PC-3 (cell line): ENCODE measurements at regions of chr9 and their contacts with region 1.

Region 1: DNA sequence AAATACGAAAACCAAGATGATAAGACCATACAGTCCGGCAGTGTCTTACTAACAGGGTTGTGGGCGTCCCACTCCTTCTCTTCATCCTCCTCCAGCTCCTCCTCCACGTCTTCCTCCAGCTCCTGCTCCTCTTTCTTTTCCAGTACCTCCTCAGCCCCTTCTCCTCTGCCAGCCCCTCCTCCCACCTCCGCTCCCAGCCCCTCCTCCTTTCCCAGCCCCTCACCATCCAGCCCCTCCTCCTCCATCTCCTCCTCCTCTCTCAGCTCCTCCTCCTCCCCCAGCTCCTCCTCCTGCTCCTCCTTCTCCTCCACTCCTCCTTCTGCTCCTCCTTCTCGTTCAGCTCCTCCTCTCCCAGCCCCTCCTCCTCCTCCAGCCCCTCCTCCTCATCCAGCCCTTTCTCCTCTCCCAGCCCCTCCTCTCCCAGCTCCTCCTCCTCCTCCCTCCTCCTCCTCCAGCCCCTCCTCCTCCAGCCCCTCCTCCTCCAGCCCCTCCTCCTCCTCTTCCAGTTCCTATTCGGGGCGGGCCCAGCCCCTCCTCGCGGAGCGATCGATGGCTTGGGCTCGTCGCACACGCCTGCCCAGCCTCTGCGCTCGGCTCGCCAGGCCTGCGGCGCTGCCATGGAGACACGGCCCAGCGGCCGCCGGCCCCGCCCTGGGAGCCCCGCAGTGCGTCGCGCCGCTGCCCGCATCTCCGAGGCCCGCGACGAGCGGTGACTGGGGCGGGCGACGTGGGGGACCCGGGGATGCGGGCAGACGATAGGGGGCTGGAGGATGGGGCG is at the start of gene BRD3OS:
- DNase-seq: peak; percentile 93
- ATAC-seq: peak; percentile 86
- H3K4me3 ChIP-seq: peak within 1 kb of the TSS; percentile 83
- H3K27ac ChIP-seq: no peak within 1 kb of the TSS
- H3K4me1 ChIP-seq: peaks cover 4% of the 10 kb centered on the region
- H3K27me3 ChIP-seq: no peaks in the 10 kb centered on the region
- CTCF ChIP-seq: no peak
- total RNA-seq, gene BRD3OS: 13.6 and 19.9 TPM in 2 replicates

Region 2: GRCh38 chr9:133759146-133759900 is 265.7 kb before region 1 on chr9:
- CTCF ChIA-PET with region 1: no interaction called
- POLR2A ChIA-PET with region 1: interaction called, 19 read pairs
- intact Hi-C with region 1: no loop called
- DNase-seq: no peak
- ATAC-seq: no peak
- H3K4me3 ChIP-seq: no peak overlapping the region
- H3K27ac ChIP-seq: no peak overlapping the region
- H3K4me1 ChIP-seq: no peaks in the 10 kb centered on the region
- H3K27me3 ChIP-seq: no peaks in the 10 kb centered on the region
- CTCF ChIP-seq: no peak

Region 3: DNA sequence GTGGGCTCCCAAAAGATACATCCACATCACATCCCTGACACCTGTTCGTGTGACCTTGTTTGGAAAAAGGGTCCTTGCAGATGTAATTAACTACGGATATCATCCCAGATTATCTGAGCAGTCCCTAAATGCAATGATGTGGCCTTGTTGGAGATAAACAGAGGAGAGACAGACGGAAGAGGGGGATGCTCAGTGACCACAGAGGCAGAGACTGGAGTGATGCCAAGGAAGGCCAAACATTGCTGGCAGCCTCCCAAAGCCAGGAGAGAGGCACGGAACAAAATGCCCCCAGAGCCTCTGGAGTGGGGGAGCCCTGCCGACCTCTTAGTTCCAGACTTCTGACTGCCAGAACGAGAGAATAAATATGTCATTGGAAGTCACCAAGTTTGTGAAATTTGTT is 17.9 kb before region 1 on chr9:
- CTCF ChIA-PET with region 1: interaction called, 10 read pairs
- POLR2A ChIA-PET with region 1: no interaction called
- intact Hi-C with region 1: no loop called
- DNase-seq: no peak
- ATAC-seq: no peak
- H3K4me3 ChIP-seq: no peak overlapping the region
- H3K27ac ChIP-seq: no peak overlapping the region
- H3K4me1 ChIP-seq: no peaks in the 10 kb centered on the region
- H3K27me3 ChIP-seq: no peaks in the 10 kb centered on the region
- CTCF ChIP-seq: no peak

Region 4: GRCh38 chr9:134067904-134068743 is 43.1 kb after region 1 on chr9 and contains the start of gene BRD3:
- CTCF ChIA-PET with region 1: no interaction called
- POLR2A ChIA-PET with region 1: no interaction called
- intact Hi-C with region 1: loop called (anchors 2 kb)
- DNase-seq: peak; percentile 85
- ATAC-seq: peak; percentile 86
- H3K4me3 ChIP-seq: peak within 1 kb of the TSS; percentile 89
- H3K27ac ChIP-seq: no peak within 1 kb of the TSS
- H3K4me1 ChIP-seq: peaks cover 9% of the 10 kb centered on the region; the same call in 1 of the 2 replicates
- H3K27me3 ChIP-seq: no peaks in the 10 kb centered on the region; the same call in 1 of the 2 replicates
- CTCF ChIP-seq: no peak
- total RNA-seq, gene BRD3: 4.4 and 5.5 TPM in 2 replicates

Region 5: DNA sequence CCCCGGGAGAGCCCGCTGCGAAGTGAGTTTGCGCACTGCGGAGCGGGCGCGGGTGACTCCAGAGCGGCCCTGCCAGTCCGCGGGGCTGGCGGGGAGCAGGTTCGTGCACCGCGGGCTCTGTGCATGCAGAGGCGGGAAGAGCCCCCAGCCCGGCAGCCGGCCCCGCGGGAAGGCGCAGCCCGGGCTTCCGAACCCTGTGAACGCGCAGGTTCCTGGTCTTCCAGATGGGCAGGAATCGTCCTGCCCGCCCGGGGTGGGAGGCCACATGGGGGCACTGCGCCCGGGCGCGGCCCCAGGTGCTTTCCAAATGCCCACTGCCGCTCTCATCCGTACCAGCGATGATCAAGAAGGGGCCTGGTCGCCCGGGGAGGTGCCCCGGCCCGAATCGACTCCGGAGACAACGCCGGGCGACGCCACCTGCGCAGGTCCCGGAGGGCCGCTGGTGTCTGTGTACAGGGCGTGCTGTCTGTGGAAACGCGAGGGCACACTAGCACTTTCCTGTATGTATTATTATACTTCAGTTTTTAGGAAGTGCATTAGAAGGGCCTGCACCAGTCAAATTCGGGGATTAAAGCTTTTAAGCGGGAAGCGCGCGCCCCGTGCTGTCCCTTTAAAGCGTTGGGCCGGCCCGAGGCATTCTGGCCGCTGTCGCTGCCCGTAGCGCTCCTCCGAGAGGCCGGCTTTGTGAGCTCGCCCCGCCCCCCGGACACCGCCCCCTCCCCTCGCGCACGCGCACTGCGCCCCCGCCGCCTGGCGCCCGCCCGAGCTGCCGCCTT is 110.5 kb after region 1 on chr9 and contains the start of gene WDR5:
- CTCF ChIA-PET with region 1: no interaction called
- POLR2A ChIA-PET with region 1: interaction called, 16 read pairs
- intact Hi-C with region 1: no loop called
- DNase-seq: peak; percentile 83
- ATAC-seq: peak; percentile 72
- H3K4me3 ChIP-seq: peak within 1 kb of the TSS; percentile 98
- H3K27ac ChIP-seq: peak within 1 kb of the TSS; percentile 31
- H3K4me1 ChIP-seq: peaks cover 25% of the 10 kb centered on the region
- H3K27me3 ChIP-seq: no peaks in the 10 kb centered on the region
- CTCF ChIP-seq: 0 out of 2 replicates have a peak, but pooled peaks have one; percentile 20
- total RNA-seq, gene WDR5: 29.1 and 35.7 TPM in 2 replicates